Posterior vena cava (tissue), 2 donors: ENCODE measurements at regions of chr2 and their contacts with region 1.

Region 1: GRCh38 chr2:12807907-12808810 is 91.4 kb downstream of the TRIB2 start:
- DNase-seq: no peak

Region 2: DNA sequence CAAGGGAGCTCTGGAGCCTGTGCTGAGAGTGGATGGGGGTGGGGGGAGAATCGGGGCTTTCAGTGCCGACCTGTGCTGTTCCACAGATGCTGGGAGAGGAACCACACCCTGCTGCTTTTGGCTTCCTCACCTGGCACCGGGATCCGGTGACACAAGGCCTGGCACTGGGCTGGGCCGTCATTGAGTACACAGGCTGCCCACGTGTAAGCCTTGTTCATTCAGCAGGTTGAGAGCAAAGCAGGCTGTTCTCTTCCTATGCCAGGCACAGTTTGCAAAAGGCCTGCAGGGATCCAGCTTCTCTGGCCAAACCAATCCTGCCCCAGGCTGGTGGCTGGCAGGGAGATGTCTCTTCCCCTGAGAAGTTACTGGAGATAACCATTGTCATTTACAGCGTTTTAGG is 74.3 kb before region 1 on chr2:
- intact Hi-C with region 1: loop called in 1 of 2 experiments (anchors 10 kb)
- DNase-seq: no peak

Region 3: GRCh38 chr2:14313341-14313740 is 1505.2 kb after region 1 on chr2:
- intact Hi-C with region 1: no loop called
- DNase-seq: no peak